Activated CD4-positive, alpha-beta memory T cell treated with anti-CD3 and anti-CD28 coated beads for 36 hours (primary cell): ENCODE measurements at regions of chr1 and their contacts with region 1.

Region 1: DNA sequence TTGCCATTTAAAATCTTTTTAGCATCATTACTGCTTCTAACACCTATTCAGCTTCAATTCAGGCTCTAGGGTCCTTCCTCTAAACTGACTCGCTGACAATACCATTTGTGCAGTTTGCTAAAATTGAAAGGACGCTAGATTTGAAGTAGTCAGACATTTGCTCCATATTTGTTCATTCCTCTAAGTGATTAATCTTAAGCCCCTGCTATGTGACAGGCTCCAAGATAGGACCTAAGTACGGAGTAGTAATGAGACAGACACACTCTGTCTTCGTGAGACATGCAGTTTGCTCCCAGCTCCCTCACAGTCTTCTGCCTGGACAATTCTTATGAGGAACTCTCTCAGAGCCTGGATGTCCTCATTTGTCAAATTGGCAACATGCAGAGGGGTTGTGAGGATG is 26.1 kb upstream of the CD53 start:
- DNase-seq: no peak
- H3K4me3 Mint-ChIP-seq: no peak overlapping the region
- H3K27ac Mint-ChIP-seq: no peak overlapping the region
- H3K4me1 Mint-ChIP-seq: peaks cover 5% of the 10 kb centered on the region
- H3K27me3 Mint-ChIP-seq: no peaks in the 10 kb centered on the region

Region 2: DNA sequence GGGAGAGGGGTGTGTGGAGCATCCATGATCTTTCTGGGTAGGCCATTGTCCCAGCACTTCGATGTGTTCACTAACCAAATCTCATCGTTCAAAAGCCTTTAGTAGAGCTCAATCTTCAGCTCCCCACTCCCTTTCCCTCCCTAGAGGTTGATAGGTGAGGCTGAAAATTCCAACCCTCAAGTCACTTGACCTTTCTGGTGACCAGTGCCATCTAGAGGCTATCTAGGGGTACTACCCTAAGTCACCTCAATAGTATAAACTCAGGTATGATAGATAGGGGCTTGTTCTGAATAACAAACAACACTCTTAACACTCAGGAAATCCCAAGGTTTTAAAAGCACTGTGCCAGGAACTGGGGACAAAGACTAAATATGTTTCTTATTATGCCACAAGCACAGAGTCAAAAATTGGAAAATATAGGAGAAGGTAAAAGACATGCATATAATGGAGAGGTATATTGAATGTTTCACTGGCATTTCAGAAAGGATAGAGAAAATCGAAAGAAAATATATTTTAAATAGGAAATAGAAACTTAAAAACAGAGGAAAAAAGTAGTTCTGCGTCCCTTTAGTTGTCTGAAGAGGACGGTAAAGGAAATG is 16.8 kb before region 1 on chr1:
- CTCF ChIA-PET with region 1: interaction called, 10 read pairs
- POLR2A ChIA-PET with region 1: no interaction called
- intact Hi-C with region 1: loop called (anchors 1 kb)
- DNase-seq: peak; percentile 13
- H3K4me3 Mint-ChIP-seq: no peak overlapping the region
- H3K27ac Mint-ChIP-seq: no peak overlapping the region
- H3K4me1 Mint-ChIP-seq: peaks cover 2% of the 10 kb centered on the region
- H3K27me3 Mint-ChIP-seq: peaks cover 1% of the 10 kb centered on the region

Region 3: DNA sequence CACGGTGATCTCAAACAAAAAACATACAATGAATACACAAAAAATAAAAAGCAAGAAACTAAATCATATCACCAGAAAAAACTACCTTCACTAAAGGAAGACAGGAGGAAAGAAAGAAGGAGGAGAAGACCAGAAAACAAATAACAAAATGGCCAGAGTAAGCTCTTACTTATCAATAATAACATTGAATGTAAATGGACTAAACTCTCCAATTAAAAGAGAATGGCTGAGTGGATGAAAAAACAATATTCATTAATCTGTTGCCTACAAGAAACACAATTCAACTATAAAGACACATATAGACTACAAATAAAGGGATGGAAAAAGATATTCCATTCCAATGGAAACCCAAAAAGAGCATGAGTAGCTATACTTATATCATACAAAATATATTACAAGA is 89.7 kb after region 1 on chr1:
- CTCF ChIA-PET with region 1: no interaction called
- POLR2A ChIA-PET with region 1: no interaction called
- intact Hi-C with region 1: no loop called
- DNase-seq: no peak
- H3K4me3 Mint-ChIP-seq: no peak overlapping the region
- H3K27ac Mint-ChIP-seq: no peak overlapping the region
- H3K4me1 Mint-ChIP-seq: no peaks in the 10 kb centered on the region
- H3K27me3 Mint-ChIP-seq: no peaks in the 10 kb centered on the region